ENCODE measurements at regions of chr19 and their contacts with region 1.

Region 1: DNA sequence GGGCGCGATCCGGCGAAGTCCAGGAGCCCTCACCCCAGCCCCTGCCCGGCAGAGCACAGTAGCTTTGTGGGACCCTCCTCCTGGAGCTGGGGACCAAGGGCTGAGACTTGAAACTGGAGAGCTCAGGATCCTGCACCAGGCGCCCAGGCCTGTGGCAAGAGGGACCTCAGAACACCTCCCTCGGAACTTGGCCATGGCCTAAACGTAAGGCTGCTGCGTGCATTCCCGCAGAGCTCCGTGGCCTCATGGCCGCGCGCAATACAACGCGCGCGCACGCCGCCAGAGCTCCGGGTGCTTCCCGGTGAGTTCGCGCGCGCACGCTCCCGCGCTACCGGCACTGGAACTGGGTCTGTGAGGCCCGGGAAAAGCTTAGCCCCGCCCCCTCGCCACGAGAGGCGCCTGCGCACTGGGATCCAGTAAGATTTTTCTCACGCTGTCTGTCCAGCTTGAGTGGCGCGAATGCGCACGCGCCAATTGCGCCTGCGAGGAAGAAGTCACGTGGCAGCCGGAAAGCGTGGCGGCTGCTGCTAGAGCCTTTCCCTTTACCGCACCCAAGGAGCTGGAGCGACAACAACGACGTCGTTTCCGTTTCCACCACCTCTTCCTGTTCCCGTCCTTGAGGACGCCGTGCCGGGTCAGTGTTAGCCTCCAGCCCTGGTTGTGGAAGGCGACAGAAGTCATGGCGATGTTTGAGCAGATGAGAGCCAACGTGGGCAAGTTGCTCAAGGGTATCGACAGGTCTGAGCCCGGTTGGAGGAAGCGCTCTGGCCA is at the start of gene EIF3K:
- DNase-seq: peak; percentile 99
- H3K4me3 ChIP-seq: peak within 1 kb of the TSS; percentile 92
- H3K27ac ChIP-seq: peak within 1 kb of the TSS; percentile 87
- H3K4me1 ChIP-seq: peaks cover 37% of the 10 kb centered on the region
- CTCF ChIP-seq: no peak
- total RNA-seq, gene EIF3K: 321 and 325 TPM in 2 replicates

Region 2: DNA sequence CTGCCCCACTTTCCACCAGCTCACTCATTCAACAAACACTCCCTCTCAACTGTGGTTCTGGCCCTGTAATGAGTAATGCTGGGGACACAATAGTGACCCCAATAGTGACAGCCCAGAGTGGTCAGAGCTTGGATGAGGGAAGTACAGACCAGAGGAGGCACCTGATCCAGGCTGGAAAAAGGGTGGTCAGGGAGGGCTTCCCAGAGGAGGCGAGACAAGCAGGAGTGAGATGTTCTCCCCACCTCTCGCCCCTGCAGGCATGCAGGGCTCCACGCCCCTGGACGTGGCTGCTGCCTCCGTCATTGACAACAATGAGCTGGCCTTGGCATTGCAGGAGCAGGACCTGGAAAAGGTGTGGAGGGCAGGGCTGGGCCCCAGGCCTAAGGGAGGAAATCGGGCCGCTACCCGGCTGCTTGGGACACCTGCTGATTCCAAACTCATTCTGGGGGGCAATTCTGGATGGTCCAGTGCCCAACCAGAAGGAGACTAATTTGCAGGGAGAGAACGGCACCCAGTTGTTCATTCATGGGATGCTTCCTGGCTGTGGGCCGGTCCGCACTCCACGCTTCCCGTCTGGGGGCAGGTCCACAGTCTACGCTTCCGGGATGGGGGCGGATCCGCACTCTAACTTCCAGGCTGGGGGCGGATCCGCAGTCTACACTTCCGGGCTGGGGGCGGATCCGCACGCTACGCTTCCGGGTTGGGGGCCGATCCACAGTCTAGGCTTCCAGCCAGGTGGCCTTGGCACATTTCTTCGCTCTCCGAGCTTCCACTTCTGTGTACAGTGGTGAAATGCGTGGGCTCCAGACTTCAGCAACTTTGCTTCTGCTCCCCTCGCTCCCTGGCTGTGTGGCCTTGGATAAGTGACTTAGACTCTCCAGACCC is 121.9 kb before region 1 on chr19:
- CTCF ChIA-PET with region 1: no interaction called
- POLR2A ChIA-PET with region 1: no interaction called
- intact Hi-C with region 1: no loop called
- DNase-seq: no peak
- H3K4me3 ChIP-seq: no peak overlapping the region
- H3K27ac ChIP-seq: no peak overlapping the region
- H3K4me1 ChIP-seq: peaks cover 7% of the 10 kb centered on the region
- CTCF ChIP-seq: no peak

Region 3: GRCh38 chr19:38538386-38538785 is 80.4 kb before region 1 on chr19:
- CTCF ChIA-PET with region 1: no interaction called
- POLR2A ChIA-PET with region 1: no interaction called
- intact Hi-C with region 1: no loop called
- DNase-seq: no peak
- H3K4me3 ChIP-seq: no peak overlapping the region
- H3K27ac ChIP-seq: no peak overlapping the region
- H3K4me1 ChIP-seq: peaks cover 15% of the 10 kb centered on the region
- CTCF ChIP-seq: no peak

Region 4: GRCh38 chr19:38557205-38557799 is 61.5 kb before region 1 on chr19:
- CTCF ChIA-PET with region 1: no interaction called
- POLR2A ChIA-PET with region 1: interaction called, 3 read pairs
- intact Hi-C with region 1: loop called (anchors 2 kb)
- DNase-seq: peak; percentile 38
- H3K4me3 ChIP-seq: no peak overlapping the region
- H3K27ac ChIP-seq: no peak overlapping the region
- H3K4me1 ChIP-seq: peaks cover 28% of the 10 kb centered on the region
- CTCF ChIP-seq: no peak

Region 5: GRCh38 chr19:38647368-38647965 is 28.7 kb after region 1 on chr19 and contains the start of gene ACTN4:
- CTCF ChIA-PET with region 1: interaction called, 3 read pairs
- POLR2A ChIA-PET with region 1: interaction called, 13 read pairs
- intact Hi-C with region 1: no loop called
- DNase-seq: peak; percentile 97
- H3K4me3 ChIP-seq: peak within 1 kb of the TSS; percentile 99
- H3K27ac ChIP-seq: peak within 1 kb of the TSS; percentile 35
- H3K4me1 ChIP-seq: peaks cover 18% of the 10 kb centered on the region
- CTCF ChIP-seq: no peak
- total RNA-seq, gene ACTN4: 86.8 and 96.9 TPM in 2 replicates

Region 6: DNA sequence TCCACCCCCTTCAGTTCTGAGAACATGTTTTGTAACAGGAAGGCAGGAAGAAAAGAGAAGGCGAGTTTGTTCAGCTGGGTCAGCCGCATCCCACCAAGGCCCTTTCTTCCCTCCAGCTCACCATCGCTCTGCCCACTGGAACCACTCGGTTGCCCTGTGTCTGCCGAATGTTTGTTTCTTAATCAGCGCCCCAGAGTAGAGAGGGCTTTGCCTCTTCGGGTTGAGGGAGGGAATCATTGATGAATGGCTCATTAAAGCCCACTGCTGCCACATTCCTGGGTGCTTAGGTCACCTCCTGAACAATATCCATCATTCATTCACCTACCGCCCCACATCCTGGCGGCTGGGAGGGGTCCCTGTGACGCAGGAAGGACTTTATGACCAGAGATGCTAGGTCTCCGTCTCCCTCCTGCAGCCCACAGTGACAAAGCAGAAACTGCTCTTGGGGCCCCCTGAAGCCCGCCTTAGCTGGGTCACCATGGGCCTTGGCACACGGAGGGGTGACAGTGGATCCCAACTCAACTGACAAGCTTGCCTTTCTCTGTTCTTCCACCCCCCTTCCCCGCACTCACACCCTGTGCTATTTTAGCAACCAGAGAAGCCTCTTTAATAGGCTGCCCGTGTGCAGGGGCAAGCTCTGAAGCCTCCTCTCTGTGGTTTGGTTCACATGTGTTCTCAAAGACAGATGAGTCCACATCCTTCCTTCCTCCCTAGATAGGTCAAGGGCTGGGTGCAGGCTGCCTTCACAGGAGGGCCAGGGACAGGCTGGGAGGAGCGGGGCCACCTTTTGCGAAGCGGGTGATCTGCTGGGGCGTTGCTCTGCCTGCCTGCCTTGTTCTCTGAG is 74.8 kb after region 1 on chr19:
- CTCF ChIA-PET with region 1: no interaction called
- POLR2A ChIA-PET with region 1: no interaction called
- intact Hi-C with region 1: no loop called
- DNase-seq: peak; percentile 9
- H3K4me3 ChIP-seq: no peak overlapping the region
- H3K27ac ChIP-seq: no peak overlapping the region
- H3K4me1 ChIP-seq: peaks cover 9% of the 10 kb centered on the region
- CTCF ChIP-seq: no peak